MCF 10A (cell line): ENCODE measurements at regions of chr7 and their contacts with region 1.

Region 1: GRCh38 chr7:29408841-29409243 is 154.8 kb upstream of the PRR15 start:
- DNase-seq: peak; percentile 83
- H3K4me3 Mint-ChIP-seq: no peak overlapping the region
- H3K27ac Mint-ChIP-seq: no peak overlapping the region
- H3K4me1 Mint-ChIP-seq: peaks cover 10% of the 10 kb centered on the region
- H3K27me3 Mint-ChIP-seq: no peaks in the 10 kb centered on the region
- CTCF ChIP-seq: peak; percentile 64

Region 2: DNA sequence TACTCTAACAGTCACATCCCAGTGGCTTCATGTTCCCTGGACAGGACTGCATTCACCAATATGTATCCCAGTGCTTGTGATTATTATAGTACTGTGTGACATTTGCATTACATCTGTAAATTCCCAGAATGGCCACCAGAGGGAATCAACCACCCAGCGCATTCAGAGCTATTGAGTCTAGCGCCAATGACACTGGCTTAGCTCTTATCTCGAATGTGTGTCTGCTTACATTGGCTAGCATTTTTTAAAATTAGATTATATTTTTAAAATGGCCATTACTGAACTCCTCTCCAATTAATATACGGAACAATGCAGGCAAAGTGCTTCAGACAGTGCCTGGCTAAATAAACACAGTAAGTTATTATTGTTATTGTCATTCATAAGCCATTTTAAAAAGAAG is 487.0 kb before region 1 on chr7:
- CTCF ChIA-PET with region 1: interaction called, 230 read pairs
- POLR2A ChIA-PET with region 1: interaction called, 10 read pairs
- intact Hi-C with region 1: loop called (anchors 1 kb)
- DNase-seq: peak; percentile 74
- H3K4me3 Mint-ChIP-seq: no peak overlapping the region
- H3K27ac Mint-ChIP-seq: no peak overlapping the region
- H3K4me1 Mint-ChIP-seq: peaks cover 7% of the 10 kb centered on the region
- H3K27me3 Mint-ChIP-seq: no peaks in the 10 kb centered on the region
- CTCF ChIP-seq: peak; percentile 81

Region 3: DNA sequence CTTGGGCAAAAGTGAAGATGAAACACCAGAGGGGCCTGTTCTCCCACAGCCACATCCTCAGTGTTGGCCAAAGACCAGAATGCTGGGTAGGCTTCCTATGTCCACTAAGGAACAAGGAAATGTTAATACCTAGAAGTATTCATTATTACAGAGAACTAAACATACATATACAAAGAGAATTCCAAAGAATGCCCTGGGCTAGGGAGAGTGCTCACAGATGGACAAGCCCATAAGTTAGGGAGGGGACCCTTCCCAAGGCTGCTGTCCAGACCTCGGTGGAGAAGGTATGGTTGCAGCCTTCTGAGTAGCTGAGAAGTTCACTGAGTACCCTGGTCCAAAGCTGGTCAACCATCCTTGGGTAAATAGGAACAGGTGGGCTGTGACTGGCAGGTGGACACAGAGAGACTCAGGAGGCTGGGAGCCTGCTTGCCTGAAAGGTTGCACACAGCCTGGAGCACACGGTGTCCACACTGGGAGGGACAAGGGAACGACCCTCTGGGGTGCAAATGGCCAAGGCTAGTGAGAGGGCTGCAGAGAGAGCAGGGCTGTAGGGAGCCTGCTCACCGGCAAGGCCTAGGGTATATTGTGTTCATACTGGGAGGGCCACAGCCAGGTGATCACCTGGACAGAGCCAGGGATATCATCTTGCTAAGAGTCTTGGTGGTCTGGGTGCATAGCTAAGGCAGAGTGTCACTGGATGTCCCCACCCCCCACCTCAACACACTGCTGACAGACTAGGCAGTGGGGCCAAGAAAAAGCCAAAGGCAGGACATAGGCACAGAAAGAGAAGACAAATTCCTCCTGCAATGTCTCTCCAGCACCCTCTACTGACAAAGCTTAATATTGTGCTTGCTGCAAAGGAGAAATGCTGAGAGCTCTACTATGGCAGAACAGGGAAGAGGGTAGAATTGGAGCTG is 302.8 kb before region 1 on chr7:
- CTCF ChIA-PET with region 1: interaction called, 48 read pairs
- POLR2A ChIA-PET with region 1: interaction called, 3 read pairs
- intact Hi-C with region 1: loop called (anchors 2 kb)
- DNase-seq: peak; percentile 72
- H3K4me3 Mint-ChIP-seq: no peak overlapping the region
- H3K27ac Mint-ChIP-seq: peak overlapping the region; percentile 60
- H3K4me1 Mint-ChIP-seq: peaks cover 47% of the 10 kb centered on the region
- H3K27me3 Mint-ChIP-seq: no peaks in the 10 kb centered on the region
- CTCF ChIP-seq: peak; percentile 80

Region 4: DNA sequence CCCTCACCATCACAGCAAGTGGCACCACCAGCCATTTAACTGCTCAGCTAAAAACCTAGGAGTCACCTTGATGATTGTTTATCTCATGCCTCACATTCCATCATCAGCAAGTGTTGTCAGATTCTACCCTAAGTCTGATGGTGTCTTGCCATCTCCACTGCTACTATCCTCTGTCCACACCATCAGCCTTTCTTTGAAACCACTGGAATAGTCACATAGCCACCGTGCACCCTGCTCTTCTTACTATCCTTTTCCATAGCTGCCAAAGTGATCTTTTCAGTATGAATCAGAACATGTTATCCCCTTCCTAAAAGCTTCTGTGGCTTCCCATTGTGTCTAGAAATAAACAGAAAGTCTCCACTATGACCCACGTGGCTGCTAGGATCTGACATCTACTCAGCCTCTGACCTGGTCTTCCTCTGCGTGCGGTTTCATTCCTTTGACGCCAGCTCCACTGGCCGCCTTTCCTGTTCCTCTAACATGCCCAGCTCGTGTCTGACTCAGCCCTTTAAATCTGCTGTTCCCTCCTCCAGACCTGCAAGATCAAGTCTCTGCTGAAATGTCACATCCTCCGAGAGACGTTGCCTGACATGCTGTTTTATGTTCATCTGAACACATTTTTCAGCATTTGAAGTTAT is 230.8 kb before region 1 on chr7:
- CTCF ChIA-PET with region 1: no interaction called
- POLR2A ChIA-PET with region 1: no interaction called
- intact Hi-C with region 1: no loop called
- DNase-seq: no peak
- H3K4me3 Mint-ChIP-seq: no peak overlapping the region
- H3K27ac Mint-ChIP-seq: peak overlapping the region; percentile 5
- H3K4me1 Mint-ChIP-seq: peaks cover 7% of the 10 kb centered on the region
- H3K27me3 Mint-ChIP-seq: no peaks in the 10 kb centered on the region
- CTCF ChIP-seq: no peak

Region 5: DNA sequence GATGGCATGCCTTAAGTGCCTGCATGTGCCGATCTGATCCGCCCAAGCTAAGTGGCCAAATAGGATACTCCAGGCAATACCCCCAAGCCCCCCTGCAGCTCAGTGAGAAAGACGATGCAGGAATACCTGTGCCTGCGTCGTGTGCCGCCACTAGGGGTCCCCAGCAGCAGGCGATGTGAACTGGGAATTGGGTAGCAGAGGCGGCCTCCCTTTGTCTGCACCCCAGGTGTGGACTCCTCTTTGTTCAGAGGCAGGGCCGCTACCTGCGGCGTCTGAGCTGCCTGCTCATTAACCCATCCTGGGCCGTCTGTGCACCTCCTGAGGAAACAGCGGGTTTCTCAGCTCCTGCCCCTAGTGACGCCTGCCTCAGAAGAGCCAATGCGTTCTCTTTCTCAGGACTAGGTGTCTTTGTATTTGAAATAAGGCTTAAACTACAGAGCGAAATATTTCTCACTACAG is 219.1 kb before region 1 on chr7:
- CTCF ChIA-PET with region 1: interaction called, 140 read pairs
- POLR2A ChIA-PET with region 1: interaction called, 8 read pairs
- intact Hi-C with region 1: loop called (anchors 1 kb)
- DNase-seq: peak; percentile 60
- H3K4me3 Mint-ChIP-seq: no peak overlapping the region
- H3K27ac Mint-ChIP-seq: no peak overlapping the region
- H3K4me1 Mint-ChIP-seq: no peaks in the 10 kb centered on the region
- H3K27me3 Mint-ChIP-seq: no peaks in the 10 kb centered on the region
- CTCF ChIP-seq: peak; percentile 87

Region 6: GRCh38 chr7:29345600-29345999 is 63.2 kb before region 1 on chr7:
- CTCF ChIA-PET with region 1: interaction called, 4 read pairs
- POLR2A ChIA-PET with region 1: interaction called, 3 read pairs
- intact Hi-C with region 1: loop called (anchors 1 kb)
- DNase-seq: peak; percentile 43
- H3K4me3 Mint-ChIP-seq: no peak overlapping the region
- H3K27ac Mint-ChIP-seq: no peak overlapping the region
- H3K4me1 Mint-ChIP-seq: peaks cover 19% of the 10 kb centered on the region
- H3K27me3 Mint-ChIP-seq: no peaks in the 10 kb centered on the region
- CTCF ChIP-seq: peak; percentile 63

Region 7: GRCh38 chr7:29548823-29549222 is 140.0 kb after region 1 on chr7:
- CTCF ChIA-PET with region 1: no interaction called
- POLR2A ChIA-PET with region 1: no interaction called
- intact Hi-C with region 1: no loop called
- DNase-seq: peak; percentile 38
- H3K4me3 Mint-ChIP-seq: no peak overlapping the region
- H3K27ac Mint-ChIP-seq: no peak overlapping the region
- H3K4me1 Mint-ChIP-seq: no peaks in the 10 kb centered on the region
- H3K27me3 Mint-ChIP-seq: no peaks in the 10 kb centered on the region
- CTCF ChIP-seq: no peak

Region 8: DNA sequence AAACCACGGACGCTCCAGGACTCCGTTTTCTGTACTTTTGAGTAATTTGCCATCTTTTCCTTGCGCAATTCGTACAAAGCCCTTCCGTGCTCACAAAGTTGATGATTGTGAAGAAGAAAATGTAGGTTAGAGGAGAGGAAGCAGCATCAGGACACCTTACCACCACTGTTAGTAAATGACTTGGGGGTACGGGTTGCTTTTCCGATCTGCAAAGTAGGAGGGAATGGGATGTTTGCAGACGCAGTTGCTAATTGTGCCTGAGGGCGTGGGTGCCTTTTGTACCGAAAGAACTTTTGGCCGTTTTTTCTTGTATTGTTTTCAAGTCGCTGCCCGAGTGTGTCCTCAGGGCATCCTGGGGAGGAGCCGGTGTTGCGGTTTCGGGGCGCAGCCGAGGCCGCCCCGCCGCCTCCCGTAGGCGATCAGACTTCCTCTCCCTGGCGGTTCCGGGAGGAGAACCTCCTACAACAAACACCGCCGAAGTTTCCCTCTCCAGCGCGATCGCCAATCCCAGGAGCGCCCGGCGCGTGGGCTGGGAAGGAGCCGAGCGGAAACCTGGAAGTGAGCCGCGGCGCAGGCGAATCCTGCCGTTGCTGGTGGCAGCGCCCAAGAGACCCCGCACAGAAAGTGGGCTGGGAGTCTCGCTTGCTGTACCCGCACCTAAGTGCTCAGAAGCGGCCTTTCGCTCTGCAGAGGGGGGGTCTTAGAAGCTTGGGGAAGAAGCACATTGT is 155.8 kb after region 1 on chr7:
- CTCF ChIA-PET with region 1: no interaction called
- POLR2A ChIA-PET with region 1: interaction called, 7 read pairs
- intact Hi-C with region 1: loop called (anchors 2 kb)
- DNase-seq: peak; percentile 90
- H3K4me3 Mint-ChIP-seq: peak overlapping the region; percentile 98
- H3K27ac Mint-ChIP-seq: peak overlapping the region; percentile 94
- H3K4me1 Mint-ChIP-seq: peaks cover 19% of the 10 kb centered on the region
- H3K27me3 Mint-ChIP-seq: no peaks in the 10 kb centered on the region
- CTCF ChIP-seq: no peak